ENCODE measurements at regions of chr19 and their contacts with region 1.

Region 1: DNA sequence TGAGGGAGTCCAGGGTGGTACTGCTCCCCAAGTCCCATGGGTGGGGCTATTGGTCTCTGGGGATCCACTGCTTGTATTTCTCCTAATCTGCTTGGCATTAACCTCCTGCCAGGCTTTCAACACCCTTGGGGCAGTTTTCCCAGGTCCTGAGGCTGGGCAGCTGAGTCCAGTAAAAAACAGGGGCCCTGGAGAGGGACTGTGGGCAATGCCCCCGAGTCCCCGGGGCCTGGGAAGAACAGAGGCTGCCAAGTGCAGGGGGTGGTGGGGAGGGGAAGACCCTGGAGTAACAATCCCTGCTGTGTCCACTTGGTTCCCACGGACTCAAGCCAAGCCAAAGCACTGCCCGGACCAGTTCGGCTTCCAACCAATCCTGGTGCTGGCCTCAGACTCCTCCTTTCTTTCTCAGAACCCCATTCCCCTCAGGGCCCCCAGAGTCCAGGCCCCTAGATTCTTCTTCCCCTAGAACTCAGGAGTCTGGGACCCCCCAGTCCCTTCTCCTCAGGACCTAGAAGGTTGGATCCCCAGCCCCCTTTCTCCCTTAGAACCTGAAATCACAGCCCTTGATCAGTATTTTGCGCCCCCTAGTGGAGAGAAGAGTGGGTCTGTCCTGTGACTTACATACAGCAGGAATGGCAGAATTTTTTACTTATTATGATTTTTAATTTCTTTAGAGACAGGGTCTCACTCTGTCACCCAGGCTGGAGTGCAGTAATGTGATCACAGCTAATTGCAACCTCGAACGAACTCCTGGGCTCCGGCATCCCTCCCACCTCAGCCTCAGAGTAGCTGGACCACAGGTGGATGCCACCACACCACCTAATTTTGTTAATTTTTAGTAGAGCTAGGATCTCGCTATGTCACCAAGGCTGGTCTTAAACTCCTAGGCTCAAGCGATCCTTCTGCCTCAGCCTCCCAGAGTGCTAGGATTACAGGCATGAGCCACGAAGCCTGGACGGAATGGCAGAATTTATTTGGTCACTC is 3.7 kb upstream of the CLPTM1 start:
- DNase-seq: peak; percentile 79
- ATAC-seq: no peak
- H3K4me3 Mint-ChIP-seq: no peak overlapping the region
- H3K27ac Mint-ChIP-seq: no peak overlapping the region
- H3K4me1 Mint-ChIP-seq: peaks cover 20% of the 10 kb centered on the region
- H3K27me3 Mint-ChIP-seq: no peaks in the 10 kb centered on the region

Region 2: GRCh38 chr19:44903602-44904425 is 47.7 kb before region 1 on chr19:
- CTCF ChIA-PET with region 1: interaction called, 34 read pairs
- POLR2A ChIA-PET with region 1: interaction called, 3 read pairs
- DNase-seq: peak; percentile 77
- ATAC-seq: peak; percentile 60
- H3K4me3 Mint-ChIP-seq: no peak overlapping the region
- H3K27ac Mint-ChIP-seq: no peak overlapping the region
- H3K4me1 Mint-ChIP-seq: peaks cover 12% of the 10 kb centered on the region
- H3K27me3 Mint-ChIP-seq: peaks cover 13% of the 10 kb centered on the region

Region 3: DNA sequence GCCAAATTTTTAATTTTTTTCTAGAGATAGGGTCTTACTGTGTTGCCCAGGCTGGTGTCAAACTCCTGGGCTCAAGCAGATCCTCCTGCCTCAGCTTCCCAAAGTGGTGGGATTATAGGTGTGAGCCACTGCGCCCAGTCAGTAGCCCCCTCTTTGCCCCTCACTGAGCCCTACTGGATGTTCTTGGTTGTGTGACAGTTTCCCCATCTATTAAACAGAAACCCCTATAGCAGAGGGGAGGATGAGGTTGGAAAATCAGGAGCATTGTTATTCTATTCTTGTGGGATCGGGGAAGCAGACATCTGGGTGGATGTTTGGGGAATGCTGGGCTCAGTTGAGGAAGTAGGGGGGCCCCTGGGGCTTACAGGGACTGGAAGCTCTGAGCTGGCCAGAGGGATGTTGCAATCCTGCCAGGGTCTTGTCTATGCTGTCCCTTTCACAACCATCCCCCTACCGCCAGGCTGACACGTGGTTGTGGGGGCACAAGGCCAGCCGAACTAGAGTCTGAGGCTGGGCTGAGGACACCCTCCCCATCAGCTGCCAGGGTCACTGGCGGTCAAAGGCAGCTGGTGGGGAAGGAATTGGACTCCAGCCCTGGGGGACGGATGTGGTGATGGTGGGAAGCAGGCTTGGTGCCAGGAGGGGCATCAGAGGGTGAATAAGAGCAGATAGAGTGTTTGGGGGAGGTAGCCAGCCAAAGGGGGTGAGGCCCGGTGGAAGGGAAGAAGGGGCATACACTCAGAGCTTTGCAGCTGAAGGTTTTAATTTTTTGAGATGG is 26.2 kb before region 1 on chr19:
- CTCF ChIA-PET with region 1: no interaction called
- POLR2A ChIA-PET with region 1: no interaction called
- DNase-seq: no peak
- ATAC-seq: no peak
- H3K4me3 Mint-ChIP-seq: no peak overlapping the region
- H3K27ac Mint-ChIP-seq: no peak overlapping the region
- H3K4me1 Mint-ChIP-seq: peaks cover 8% of the 10 kb centered on the region
- H3K27me3 Mint-ChIP-seq: peaks cover 16% of the 10 kb centered on the region